Caco-2 (cell line): ENCODE measurements at regions of chr12 and their contacts with region 1.

Region 1: GRCh38 chr12:22443379-22444316 is 100.7 kb downstream of the C2CD5 start:
- DNase-seq: peak; percentile 84 to 85
- H3K4me3 ChIP-seq: no peak overlapping the region
- H3K4me3 Mint-ChIP-seq: no peak overlapping the region
- H3K27ac Mint-ChIP-seq: no peak overlapping the region
- H3K4me1 ChIP-seq: no peaks in the 10 kb centered on the region
- H3K4me1 Mint-ChIP-seq: no peaks in the 10 kb centered on the region
- H3K27me3 ChIP-seq: no peaks in the 10 kb centered on the region
- H3K27me3 Mint-ChIP-seq: peaks cover 3% of the 10 kb centered on the region
- CTCF ChIP-seq: peak; percentile 87 to 96

Region 2: GRCh38 chr12:21607701-21608100 is 835.9 kb before region 1 on chr12:
- CTCF ChIA-PET with region 1: no interaction called
- POLR2A ChIA-PET with region 1: no interaction called
- intact Hi-C with region 1: loop called (anchors 5 kb)
- DNase-seq: peak in 1 of 2 experiments; percentile 40
- H3K4me3 ChIP-seq: no peak overlapping the region
- H3K4me3 Mint-ChIP-seq: no peak overlapping the region
- H3K27ac Mint-ChIP-seq: no peak overlapping the region
- H3K4me1 ChIP-seq: peaks cover 23% of the 10 kb centered on the region
- H3K4me1 Mint-ChIP-seq: peaks cover 7% of the 10 kb centered on the region
- H3K27me3 ChIP-seq: no peaks in the 10 kb centered on the region
- H3K27me3 Mint-ChIP-seq: no peaks in the 10 kb centered on the region
- CTCF ChIP-seq: peak; percentile 48 to 49

Region 3: GRCh38 chr12:22029991-22030390 is 413.7 kb before region 1 on chr12:
- CTCF ChIA-PET with region 1: no interaction called
- POLR2A ChIA-PET with region 1: no interaction called
- intact Hi-C with region 1: no loop called
- DNase-seq: no peak
- H3K4me3 ChIP-seq: no peak overlapping the region
- H3K4me3 Mint-ChIP-seq: no peak overlapping the region
- H3K27ac Mint-ChIP-seq: no peak overlapping the region
- H3K4me1 ChIP-seq: peaks cover 9% of the 10 kb centered on the region
- H3K4me1 Mint-ChIP-seq: peaks cover 9% of the 10 kb centered on the region
- H3K27me3 ChIP-seq: no peaks in the 10 kb centered on the region
- H3K27me3 Mint-ChIP-seq: no peaks in the 10 kb centered on the region
- CTCF ChIP-seq: no peak

Region 4: GRCh38 chr12:22083167-22083566 is 360.5 kb before region 1 on chr12:
- CTCF ChIA-PET with region 1: interaction called, 14 read pairs
- POLR2A ChIA-PET with region 1: no interaction called
- intact Hi-C with region 1: loop called (anchors 1 kb)
- DNase-seq: peak in 1 of 2 experiments; percentile 36
- H3K4me3 ChIP-seq: no peak overlapping the region
- H3K4me3 Mint-ChIP-seq: no peak overlapping the region
- H3K27ac Mint-ChIP-seq: no peak overlapping the region
- H3K4me1 ChIP-seq: peaks cover 16% of the 10 kb centered on the region; the same call in 1 of the 2 replicates
- H3K4me1 Mint-ChIP-seq: peaks cover 11% of the 10 kb centered on the region
- H3K27me3 ChIP-seq: no peaks in the 10 kb centered on the region; the same call in 1 of the 2 replicates
- H3K27me3 Mint-ChIP-seq: peaks cover 6% of the 10 kb centered on the region
- CTCF ChIP-seq: peak; percentile 52 to 79

Region 5: GRCh38 chr12:22121227-22121626 is 322.4 kb before region 1 on chr12:
- CTCF ChIA-PET with region 1: interaction called, 11 read pairs
- POLR2A ChIA-PET with region 1: no interaction called
- intact Hi-C with region 1: no loop called
- DNase-seq: peak in 1 of 2 experiments; percentile 65
- H3K4me3 ChIP-seq: no peak overlapping the region
- H3K4me3 Mint-ChIP-seq: no peak overlapping the region
- H3K27ac Mint-ChIP-seq: no peak overlapping the region
- H3K4me1 ChIP-seq: no peaks in the 10 kb centered on the region
- H3K4me1 Mint-ChIP-seq: no peaks in the 10 kb centered on the region
- H3K27me3 ChIP-seq: peaks cover 2% of the 10 kb centered on the region
- H3K27me3 Mint-ChIP-seq: peaks cover 5% of the 10 kb centered on the region
- CTCF ChIP-seq: peak; percentile 65 to 68

Region 6: GRCh38 chr12:22231836-22232235 is 211.8 kb before region 1 on chr12:
- CTCF ChIA-PET with region 1: no interaction called
- POLR2A ChIA-PET with region 1: no interaction called
- intact Hi-C with region 1: loop called (anchors 5 kb)
- DNase-seq: no peak
- H3K4me3 ChIP-seq: no peak overlapping the region
- H3K4me3 Mint-ChIP-seq: no peak overlapping the region
- H3K27ac Mint-ChIP-seq: no peak overlapping the region
- H3K4me1 ChIP-seq: no peaks in the 10 kb centered on the region
- H3K4me1 Mint-ChIP-seq: no peaks in the 10 kb centered on the region
- H3K27me3 ChIP-seq: no peaks in the 10 kb centered on the region; the same call in 1 of the 2 replicates
- H3K27me3 Mint-ChIP-seq: peaks cover 12% of the 10 kb centered on the region
- CTCF ChIP-seq: peak in 1 of 2 experiments; percentile 27